ENCODE measurements at regions of chr7 and their contacts with region 1.

Region 1: DNA sequence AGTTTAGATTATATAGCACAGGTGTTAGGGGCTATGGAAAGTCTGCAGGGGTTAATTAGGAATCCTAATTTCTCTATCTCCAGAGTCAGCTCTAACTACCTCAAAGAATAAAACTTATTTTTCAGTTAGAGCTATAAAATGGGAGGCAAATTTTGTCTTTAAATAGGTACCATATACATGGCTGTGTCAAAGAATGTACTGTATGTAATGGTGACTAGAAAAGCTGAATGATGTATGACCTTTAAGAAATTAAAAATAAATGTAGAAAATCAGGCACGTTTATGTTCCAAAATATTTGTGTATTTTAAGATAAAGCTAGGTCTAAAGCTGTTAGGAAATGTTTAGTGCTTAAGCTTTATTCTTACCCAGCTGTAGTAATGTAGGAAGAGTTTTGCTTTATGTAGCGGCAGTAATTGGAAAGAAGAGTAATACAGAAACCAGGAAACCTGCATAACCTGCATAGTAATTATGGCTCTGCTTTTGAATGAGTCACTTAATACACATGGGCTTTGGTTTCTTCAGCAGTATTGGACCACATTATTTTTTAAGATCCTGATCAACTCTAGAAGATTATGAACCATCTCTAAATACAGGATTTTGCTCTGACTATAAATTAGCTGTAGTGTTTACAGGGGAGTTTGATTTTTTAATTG is 85.0 kb downstream of the KMT2E start:
- DNase-seq: no peak
- H3K4me3 Mint-ChIP-seq: no peak overlapping the region
- H3K27ac Mint-ChIP-seq: peak overlapping the region; percentile 63
- H3K4me1 Mint-ChIP-seq: peaks cover 41% of the 10 kb centered on the region
- H3K27me3 Mint-ChIP-seq: no peaks in the 10 kb centered on the region

Region 2: DNA sequence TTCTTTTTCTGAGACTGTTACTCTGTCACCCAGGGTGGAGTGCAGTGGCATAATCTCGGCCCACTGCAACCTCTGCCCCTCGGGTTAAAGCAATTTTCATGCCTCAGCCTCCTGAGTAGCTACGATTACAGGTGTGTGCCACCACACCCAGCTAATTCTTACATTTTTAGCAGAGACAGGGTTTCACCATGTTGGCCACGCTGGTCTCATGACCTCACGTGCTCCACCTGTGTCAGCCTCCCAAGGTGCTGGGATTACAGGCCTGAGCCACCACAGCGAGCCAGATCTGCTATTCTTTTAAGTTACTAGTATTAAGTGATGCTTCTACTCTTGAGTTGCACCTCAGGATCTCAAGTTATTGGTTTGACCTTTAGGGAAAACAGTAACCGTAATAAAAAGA is 108.0 kb before region 1 on chr7:
- intact Hi-C with region 1: no loop called
- DNase-seq: no peak
- H3K4me3 Mint-ChIP-seq: no peak overlapping the region
- H3K27ac Mint-ChIP-seq: no peak overlapping the region
- H3K4me1 Mint-ChIP-seq: peaks cover 31% of the 10 kb centered on the region
- H3K27me3 Mint-ChIP-seq: no peaks in the 10 kb centered on the region

Region 3: GRCh38 chr7:105024743-105025142 is 74.2 kb before region 1 on chr7:
- intact Hi-C with region 1: loop called (anchors 10 kb)
- DNase-seq: no peak
- H3K4me3 Mint-ChIP-seq: peak overlapping the region; percentile 8
- H3K27ac Mint-ChIP-seq: no peak overlapping the region
- H3K4me1 Mint-ChIP-seq: peaks cover 74% of the 10 kb centered on the region
- H3K27me3 Mint-ChIP-seq: no peaks in the 10 kb centered on the region

Region 4: DNA sequence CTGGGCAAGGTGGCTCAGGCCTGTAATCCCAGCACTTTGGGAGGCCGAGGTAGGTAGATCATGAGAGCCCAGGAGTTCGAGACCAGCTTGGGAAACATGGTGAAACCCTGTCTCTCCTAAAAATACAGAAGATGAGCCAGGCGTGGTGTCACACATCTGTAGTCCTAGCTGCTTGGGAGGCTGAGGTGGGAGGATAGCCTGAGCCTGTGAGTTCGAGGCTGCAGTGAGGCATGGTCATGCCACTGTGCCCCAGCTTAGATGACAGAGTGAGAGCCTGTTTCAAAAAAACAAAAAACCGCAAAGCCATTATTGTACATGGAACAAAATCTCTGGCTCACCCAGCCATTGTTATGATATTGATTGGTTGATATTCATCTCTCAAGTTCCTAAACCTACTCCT is 31.3 kb before region 1 on chr7:
- intact Hi-C with region 1: loop called (anchors 5 kb)
- DNase-seq: no peak
- H3K4me3 Mint-ChIP-seq: no peak overlapping the region
- H3K27ac Mint-ChIP-seq: no peak overlapping the region
- H3K4me1 Mint-ChIP-seq: peaks cover 10% of the 10 kb centered on the region
- H3K27me3 Mint-ChIP-seq: no peaks in the 10 kb centered on the region

Measured in activated T-helper 2 cell treated with anti-CD3 and anti-CD28 coated beads, Interferon-gamma antibody, Interleukin-2, Interleukin-4, amounts not matched to agents 10 μg/mL and 5 μg/mL and 100 μg/mL, durations not matched to agents 14 hours and 24 hours and 36 hours (primary cell).